HepG2 (cell line): ENCODE measurements at regions of chr11 and their contacts with region 1.

Region 1: GRCh38 chr11:10514210-10514609 is 26.8 kb downstream of the RNF141 start:
- DNase-seq: no peak
- ATAC-seq: no peak
- H3K4me3 ChIP-seq: no peak overlapping the region
- H3K27ac ChIP-seq: no peak overlapping the region
- H3K4me1 ChIP-seq: no peaks in the 10 kb centered on the region
- H3K27me3 ChIP-seq: no peaks in the 10 kb centered on the region
- CTCF ChIP-seq: no peak
- EP300 ChIP-seq: no peak
- POLR2A ChIP-seq: no peak
- RAD21 ChIP-seq: no peak

Region 2: GRCh38 chr11:10162716-10163115 is 351.5 kb before region 1 on chr11:
- CTCF ChIA-PET with region 1: no interaction called
- POLR2A ChIA-PET with region 1: no interaction called
- in situ Hi-C with region 1: no loop called
- intact Hi-C with region 1: no loop called
- DNase-seq: no peak
- ATAC-seq: no peak
- H3K4me3 ChIP-seq: no peak overlapping the region
- H3K27ac ChIP-seq: no peak overlapping the region
- H3K4me1 ChIP-seq: no peaks in the 10 kb centered on the region
- H3K27me3 ChIP-seq: no peaks in the 10 kb centered on the region
- CTCF ChIP-seq: no peak
- EP300 ChIP-seq: no peak
- POLR2A ChIP-seq: no peak
- RAD21 ChIP-seq: no peak

Region 3: DNA sequence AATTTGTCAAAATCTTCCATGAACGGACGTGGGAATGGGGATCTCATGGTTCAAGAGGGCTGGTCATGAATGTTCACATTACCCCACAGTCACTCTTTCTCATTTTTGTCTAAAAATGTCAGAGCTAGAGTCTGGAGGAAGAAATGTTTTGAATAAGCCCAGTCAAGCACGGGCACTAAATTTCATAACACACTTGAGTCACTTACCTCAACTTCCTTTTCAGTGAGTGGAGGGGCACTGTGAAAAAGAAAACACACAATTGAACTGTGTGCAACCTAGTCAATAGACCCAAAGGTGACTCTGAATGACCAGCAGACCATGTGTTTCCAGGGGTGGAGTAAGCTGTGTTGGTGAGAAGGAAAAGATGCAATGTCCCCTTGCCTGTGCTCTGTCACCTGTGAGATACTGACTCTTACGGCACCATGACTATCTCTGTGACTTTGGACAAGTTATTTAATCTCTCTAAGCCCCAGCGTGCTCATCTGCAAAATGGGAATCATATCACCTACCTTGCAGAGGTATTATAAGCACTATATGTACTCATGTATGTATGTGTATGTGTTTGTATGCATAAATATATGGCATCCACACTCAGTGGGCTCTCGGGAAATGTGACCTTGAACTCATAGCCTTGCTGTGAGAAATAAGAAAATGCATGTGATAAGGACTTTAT is 92.5 kb after region 1 on chr11:
- CTCF ChIA-PET with region 1: no interaction called
- POLR2A ChIA-PET with region 1: no interaction called
- in situ Hi-C with region 1: no loop called
- intact Hi-C with region 1: no loop called
- DNase-seq: no peak
- ATAC-seq: no peak
- H3K4me3 ChIP-seq: peak overlapping the region in 1 of 3 experiments; percentile 14; a peak in 1 of 6 replicates
- H3K27ac ChIP-seq: no peak overlapping the region
- H3K4me1 ChIP-seq: peaks cover 52% of the 10 kb centered on the region
- H3K27me3 ChIP-seq: peaks cover 0 to 7% of the 10 kb centered on the region in 2 experiments; a peak in 3 of 5 replicates
- CTCF ChIP-seq: no peak
- EP300 ChIP-seq: no peak
- POLR2A ChIP-seq: no peak
- RAD21 ChIP-seq: no peak

Region 4: GRCh38 chr11:10653926-10654810 is 140.0 kb after region 1 on chr11:
- CTCF ChIA-PET with region 1: interaction called, 5 read pairs
- POLR2A ChIA-PET with region 1: no interaction called
- in situ Hi-C with region 1: no loop called
- intact Hi-C with region 1: loop called (anchors 1 kb)
- DNase-seq: peak; percentile 57
- ATAC-seq: peak; percentile 71
- H3K4me3 ChIP-seq: no peak overlapping the region
- H3K27ac ChIP-seq: no peak overlapping the region
- H3K4me1 ChIP-seq: peaks cover 20% of the 10 kb centered on the region
- H3K27me3 ChIP-seq: peaks cover 0 to 10% of the 10 kb centered on the region in 2 experiments; a peak in 2 of 5 replicates
- CTCF ChIP-seq: peak; percentile 80
- EP300 ChIP-seq: no peak
- POLR2A ChIP-seq: no peak
- RAD21 ChIP-seq: peak; percentile 64